PC-3 (cell line): ENCODE measurements at regions of chr2 and their contacts with region 1.

Region 1: GRCh38 chr2:144796936-144797335 is 277.0 kb upstream of the ZEB2 start:
- DNase-seq: no peak
- ATAC-seq: no peak
- H3K4me3 ChIP-seq: no peak overlapping the region
- H3K27ac ChIP-seq: no peak overlapping the region
- H3K4me1 ChIP-seq: peaks cover 6% of the 10 kb centered on the region
- H3K27me3 ChIP-seq: no peaks in the 10 kb centered on the region
- CTCF ChIP-seq: no peak

Region 2: GRCh38 chr2:144835634-144836350 is 38.9 kb after region 1 on chr2:
- CTCF ChIA-PET with region 1: no interaction called
- POLR2A ChIA-PET with region 1: interaction called, 11 read pairs
- intact Hi-C with region 1: no loop called
- DNase-seq: peak; percentile 42
- ATAC-seq: peak; percentile 74
- H3K4me3 ChIP-seq: no peak overlapping the region
- H3K27ac ChIP-seq: no peak overlapping the region
- H3K4me1 ChIP-seq: peaks cover 31% of the 10 kb centered on the region
- H3K27me3 ChIP-seq: no peaks in the 10 kb centered on the region
- CTCF ChIP-seq: no peak

Region 3: DNA sequence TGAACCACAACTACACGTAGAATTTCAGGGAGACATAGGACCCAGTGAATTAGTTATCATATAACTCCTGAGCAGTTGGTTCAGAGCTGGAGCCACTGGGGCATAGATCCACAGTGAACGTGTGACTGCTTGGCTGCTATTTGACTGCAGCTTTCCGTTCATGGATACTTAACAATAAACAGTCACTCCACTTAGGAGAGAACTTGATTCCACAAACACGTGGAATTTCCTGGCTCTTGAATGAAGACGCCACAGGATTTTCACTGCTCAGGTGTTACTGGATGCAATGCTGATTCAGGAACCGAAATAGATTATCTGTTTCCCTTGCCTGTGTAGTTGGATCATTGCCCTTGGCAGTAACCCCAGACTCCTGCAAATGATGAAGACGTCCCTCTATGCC is 402.1 kb after region 1 on chr2:
- CTCF ChIA-PET with region 1: no interaction called
- POLR2A ChIA-PET with region 1: no interaction called
- intact Hi-C with region 1: no loop called
- DNase-seq: no peak
- ATAC-seq: no peak
- H3K4me3 ChIP-seq: no peak overlapping the region
- H3K27ac ChIP-seq: no peak overlapping the region
- H3K4me1 ChIP-seq: no peaks in the 10 kb centered on the region
- H3K27me3 ChIP-seq: no peaks in the 10 kb centered on the region
- CTCF ChIP-seq: no peak